Body of pancreas (tissue), 4 donors: ENCODE measurements at regions of chr1 and their contacts with region 1.

Region 1: GRCh38 chr1:234716908-234717375 is 107.0 kb upstream of the IRF2BP2 start:
- DNase-seq: peak in 1 of 4 donors; percentile 26
- ATAC-seq: no peak
- H3K4me3 ChIP-seq: no peak overlapping the region
- H3K27ac ChIP-seq: peak overlapping the region; percentile 42 to 98 (median 96)
- H3K4me1 ChIP-seq: peaks cover 64% of the 10 kb centered on the region
- H3K27me3 ChIP-seq: no peaks in the 10 kb centered on the region
- CTCF ChIP-seq: no peak
- POLR2A ChIP-seq: no peak

Region 2: GRCh38 chr1:234478481-234479309 is 238.2 kb before region 1 on chr1 and contains the start of gene TARBP1:
- intact Hi-C with region 1: no loop called
- DNase-seq: peak; percentile 69 to 80 (median 72)
- ATAC-seq: peak; percentile 82
- H3K4me3 ChIP-seq: peak within 1 kb of the TSS; percentile 47 to 63
- H3K27ac ChIP-seq: peak within 1 kb of the TSS; percentile 86 to 97 (median 96)
- H3K4me1 ChIP-seq: peaks cover 21% of the 10 kb centered on the region
- H3K27me3 ChIP-seq: no peaks in the 10 kb centered on the region
- CTCF ChIP-seq: peak in 3 of 7 experiments; percentile 9 to 48 (median 47)
- POLR2A ChIP-seq: peak; percentile 65 to 78 (median 75)
- total RNA-seq, gene TARBP1: 30.6 to 32.0 TPM

Region 3: DNA sequence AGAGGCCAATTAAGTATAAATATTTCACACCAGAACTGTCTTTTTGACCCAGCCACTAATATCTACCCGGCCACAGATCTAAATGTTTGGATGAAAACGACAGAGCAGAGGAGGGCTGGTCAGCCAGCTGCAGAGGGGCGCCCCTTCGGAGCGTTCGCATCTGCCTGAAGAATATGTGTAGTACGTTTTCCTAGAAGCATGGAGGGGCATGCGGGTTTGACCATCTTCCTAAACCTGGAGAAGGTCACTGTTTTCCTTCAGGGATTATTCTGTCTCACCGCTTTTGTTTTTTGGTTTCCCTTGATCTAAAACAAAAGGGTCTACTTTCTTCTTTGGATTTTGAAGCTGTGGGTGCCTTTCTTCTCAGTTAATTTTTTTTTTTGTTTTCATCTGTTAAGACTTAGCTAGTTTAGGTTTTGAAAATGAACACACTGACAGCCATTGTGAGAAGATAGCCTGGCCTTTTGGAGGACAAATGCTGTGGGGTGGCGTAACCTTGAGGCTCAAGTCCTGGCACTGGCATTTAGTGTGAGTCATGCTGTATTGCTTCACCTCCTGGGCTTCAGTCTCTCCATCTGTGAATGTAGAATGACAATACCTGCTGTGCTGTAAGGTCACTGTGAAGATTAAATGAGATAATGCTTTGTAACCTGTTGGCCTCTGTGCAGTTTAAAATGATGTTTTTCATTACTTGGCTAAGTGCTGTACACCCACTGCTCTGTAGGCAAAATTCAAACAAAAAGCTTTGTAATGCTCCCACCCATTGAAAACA is 32.9 kb before region 1 on chr1:
- intact Hi-C with region 1: loop called (anchors 5 kb)
- DNase-seq: peak; percentile 85 to 95 (median 90)
- ATAC-seq: peak; percentile 100
- H3K4me3 ChIP-seq: no peak overlapping the region
- H3K27ac ChIP-seq: peak overlapping the region; percentile 75 to 89 (median 78)
- H3K4me1 ChIP-seq: peaks cover 21% of the 10 kb centered on the region
- H3K27me3 ChIP-seq: no peaks in the 10 kb centered on the region
- CTCF ChIP-seq: peak in 1 of 7 experiments; percentile 0
- POLR2A ChIP-seq: no peak